ENCODE measurements at regions of chr2 and their contacts with region 1.

Region 1: DNA sequence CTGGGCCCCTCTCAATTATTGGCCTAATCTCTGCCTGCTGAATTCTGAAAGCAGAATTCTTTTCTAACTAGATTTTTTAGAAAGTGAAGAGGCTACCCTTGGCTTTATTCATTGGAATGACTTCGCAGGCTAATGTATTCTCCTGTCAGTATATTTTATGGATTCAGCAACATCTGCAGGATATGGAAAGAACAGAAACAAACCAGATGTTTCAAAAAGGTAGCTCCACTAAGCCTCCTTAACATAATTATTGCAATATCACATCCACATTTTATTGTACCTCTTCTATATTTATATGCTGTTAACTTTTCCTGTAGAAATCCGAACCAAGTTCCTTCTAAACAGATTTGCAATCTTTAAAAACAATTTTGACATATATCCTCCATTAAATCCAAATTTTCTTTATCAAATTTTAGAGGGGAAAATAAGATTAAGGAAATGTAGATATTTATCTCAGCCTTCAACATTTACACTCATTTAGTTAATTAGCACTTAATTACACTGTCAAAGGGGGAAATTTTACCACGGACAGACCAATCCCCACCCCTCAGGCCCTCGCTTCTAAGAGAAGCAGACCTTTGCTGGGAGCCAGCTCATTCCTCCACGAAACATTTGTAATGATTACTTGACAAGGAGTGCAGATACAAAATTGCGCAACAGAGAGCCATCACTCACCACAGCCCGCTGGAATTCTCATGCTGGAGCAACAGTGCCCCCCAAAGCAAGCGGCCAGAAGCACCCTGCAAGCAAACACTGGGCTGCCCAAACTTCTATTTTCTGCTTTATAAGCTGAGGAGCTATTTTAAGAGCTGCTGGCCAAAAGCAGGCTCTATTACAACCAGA is 253.4 kb downstream of the ETAA1 start:
- DNase-seq: peak; percentile 93

Region 2: GRCh38 chr2:66429071-66429477 is 1221.4 kb before region 1 on chr2:
- intact Hi-C with region 1: loop called in 1 of 2 experiments (anchors 10 kb)
- DNase-seq: no peak

Region 3: DNA sequence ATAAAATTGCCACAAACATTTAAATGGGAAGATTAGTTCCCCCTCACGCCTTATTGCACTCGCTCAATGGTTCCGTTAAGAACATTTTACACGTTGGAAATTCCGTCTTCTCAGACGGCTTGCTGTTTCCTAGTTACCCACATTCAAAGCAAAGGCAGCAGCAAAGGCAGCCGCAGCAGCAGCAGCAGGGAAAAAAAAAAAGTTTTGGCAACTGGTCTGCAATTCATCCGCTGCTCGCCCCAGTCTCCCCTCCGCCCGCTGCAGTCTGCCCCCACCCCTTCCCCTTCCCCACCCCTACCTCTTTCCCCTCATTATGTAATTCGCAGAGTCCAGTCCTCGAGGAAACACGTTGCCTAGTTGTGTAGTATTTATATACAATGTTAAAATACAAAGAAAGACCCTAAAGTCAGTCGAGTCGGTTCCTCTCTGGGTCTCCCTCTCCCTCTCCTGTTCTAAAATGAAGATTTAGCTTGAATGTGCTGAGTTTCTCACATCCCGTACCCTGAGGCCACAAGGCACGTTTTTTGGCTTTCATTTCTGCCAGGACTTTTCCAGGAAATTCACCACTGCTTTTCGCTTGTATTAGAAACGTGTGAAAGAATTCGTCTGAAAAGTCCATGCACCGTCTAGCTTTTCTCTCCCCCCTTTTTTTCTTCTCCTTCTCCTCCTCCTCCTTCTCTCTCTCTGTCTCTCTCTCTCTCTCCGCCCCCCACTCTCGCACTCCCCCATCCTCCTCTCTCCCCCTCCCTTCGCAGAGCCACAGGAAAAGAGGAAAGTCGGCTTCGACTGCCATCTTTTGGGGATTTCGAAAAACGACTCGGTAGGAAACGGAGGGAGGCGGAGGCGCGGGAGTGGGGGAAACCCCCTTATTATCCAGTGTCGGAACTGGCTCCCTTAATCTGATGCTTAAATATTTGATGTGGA is 1075.5 kb before region 1 on chr2:
- intact Hi-C with region 1: loop called in 1 of 2 experiments (anchors 10 kb)
- DNase-seq: peak; percentile 89

Region 4: GRCh38 chr2:67145851-67146250 is 504.7 kb before region 1 on chr2:
- intact Hi-C with region 1: loop called in 1 of 2 experiments (anchors 5 kb)
- DNase-seq: no peak

Region 5: DNA sequence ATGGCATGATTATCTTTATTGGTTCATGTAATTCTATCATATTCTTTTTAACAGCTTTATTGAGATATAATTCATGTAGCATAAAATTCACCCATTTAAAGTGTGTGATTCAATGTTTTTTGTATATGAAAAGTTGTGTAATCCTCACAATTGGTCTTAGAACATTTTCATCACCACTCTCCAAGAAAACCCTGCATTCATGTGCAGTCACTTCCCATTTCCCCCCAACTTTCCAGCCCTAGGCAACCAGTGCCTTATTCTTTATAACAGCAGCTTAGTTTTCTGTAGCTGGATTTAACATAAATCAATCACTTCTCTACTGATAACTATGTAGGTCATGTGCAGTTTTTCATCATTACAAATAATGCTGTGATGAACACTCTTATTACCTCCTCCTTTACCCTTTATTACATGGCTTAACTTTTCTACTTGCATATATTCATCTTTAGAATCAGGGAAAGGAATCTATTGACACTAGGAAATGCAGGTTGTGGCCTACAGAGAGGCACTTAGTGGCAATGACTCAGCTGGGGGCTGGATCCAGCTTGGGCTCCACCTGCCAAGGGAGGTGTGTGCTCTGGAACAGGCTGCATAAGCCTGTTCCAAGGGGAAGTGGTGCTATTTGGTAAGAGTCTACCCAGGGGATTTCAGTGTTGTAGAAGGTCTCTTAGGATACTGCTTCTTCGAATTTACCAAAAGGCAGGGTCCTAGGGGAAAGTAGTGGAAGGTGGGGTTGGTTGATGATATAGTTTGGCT is 164.3 kb before region 1 on chr2:
- intact Hi-C with region 1: loop called in 1 of 2 experiments (anchors 10 kb)
- DNase-seq: no peak

Region 6: GRCh38 chr2:67625690-67626475 is 24.6 kb before region 1 on chr2:
- intact Hi-C with region 1: no loop called
- DNase-seq: no peak

Region 7: DNA sequence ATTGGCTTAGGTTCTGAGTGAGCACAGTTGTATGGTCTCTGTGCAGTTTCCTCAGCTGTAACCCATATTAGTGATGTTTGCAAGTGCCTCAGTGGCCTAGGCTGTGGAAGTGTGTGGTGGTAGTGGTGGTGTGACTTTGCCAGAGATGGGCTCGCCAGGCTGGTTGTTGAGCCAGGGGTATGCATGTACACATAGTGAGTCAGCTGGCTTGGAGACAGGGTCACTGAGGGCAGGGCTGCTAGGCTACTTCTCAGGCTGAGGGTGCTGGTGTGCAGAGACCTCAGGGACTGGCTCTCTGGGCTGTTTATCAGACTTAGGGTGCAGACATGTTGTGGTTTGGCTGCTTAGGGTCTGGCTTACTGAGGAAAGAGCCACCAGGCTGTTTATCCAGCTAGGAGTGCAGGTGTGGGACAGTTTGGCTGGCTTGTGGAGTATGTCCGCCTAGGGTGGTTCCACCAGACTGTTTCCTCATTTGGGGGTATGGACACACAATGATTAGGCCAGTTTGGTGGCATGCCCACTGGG is 831.8 kb after region 1 on chr2:
- intact Hi-C with region 1: no loop called
- DNase-seq: no peak

Measured in posterior vena cava (tissue), 2 donors.